ENCODE measurements at regions of chr2 and their contacts with region 1.

Region 1: DNA sequence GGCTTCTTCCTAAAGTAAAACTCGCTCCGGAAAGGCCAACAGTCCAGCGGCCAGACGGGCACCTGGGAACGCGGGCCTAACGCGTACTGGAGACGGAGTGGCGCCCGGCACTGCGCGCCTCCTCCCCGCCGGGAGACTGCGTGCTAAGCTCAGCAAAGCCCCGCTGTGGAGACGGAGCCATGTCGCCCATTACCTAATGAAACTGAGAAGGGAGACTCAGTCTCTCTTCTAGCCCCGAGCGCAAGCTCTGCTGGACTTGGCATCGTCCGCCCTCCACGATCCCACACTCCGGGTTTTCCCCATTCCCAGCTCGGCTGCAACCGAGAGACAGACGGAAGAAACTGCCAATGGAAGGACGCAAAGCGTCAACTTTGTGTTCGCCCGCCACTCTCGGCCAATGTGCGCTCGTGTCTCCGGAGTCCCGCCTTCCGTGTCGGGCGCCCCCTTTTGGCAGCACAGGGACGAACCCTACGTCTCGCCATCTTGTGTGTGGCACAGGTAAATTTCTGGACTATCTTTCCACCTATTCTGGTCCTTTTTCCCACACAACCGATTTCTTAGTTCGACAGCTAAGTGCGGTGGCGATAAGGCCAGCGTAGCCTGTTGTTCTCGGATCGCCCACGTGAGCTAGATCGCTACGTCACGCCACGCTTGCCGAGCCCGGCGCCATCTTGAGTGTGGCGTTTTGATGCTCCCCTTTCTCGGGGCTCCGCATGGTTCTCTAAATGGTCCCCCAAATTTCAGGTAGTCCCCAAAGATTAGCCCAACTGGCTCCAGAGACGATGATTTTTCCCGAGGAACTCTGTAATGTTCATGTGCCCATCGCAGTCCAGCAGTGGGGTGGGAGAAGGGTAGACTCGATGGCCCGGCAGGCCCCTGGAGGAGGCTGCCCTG is 1.3 kb upstream of the PTMA start:
- DNase-seq: peak; percentile 98
- H3K4me3 Mint-ChIP-seq: peak overlapping the region; percentile 91
- H3K27ac Mint-ChIP-seq: peak overlapping the region; percentile 100
- H3K4me1 Mint-ChIP-seq: peaks cover 26% of the 10 kb centered on the region
- H3K27me3 Mint-ChIP-seq: peaks cover 2% of the 10 kb centered on the region

Region 2: DNA sequence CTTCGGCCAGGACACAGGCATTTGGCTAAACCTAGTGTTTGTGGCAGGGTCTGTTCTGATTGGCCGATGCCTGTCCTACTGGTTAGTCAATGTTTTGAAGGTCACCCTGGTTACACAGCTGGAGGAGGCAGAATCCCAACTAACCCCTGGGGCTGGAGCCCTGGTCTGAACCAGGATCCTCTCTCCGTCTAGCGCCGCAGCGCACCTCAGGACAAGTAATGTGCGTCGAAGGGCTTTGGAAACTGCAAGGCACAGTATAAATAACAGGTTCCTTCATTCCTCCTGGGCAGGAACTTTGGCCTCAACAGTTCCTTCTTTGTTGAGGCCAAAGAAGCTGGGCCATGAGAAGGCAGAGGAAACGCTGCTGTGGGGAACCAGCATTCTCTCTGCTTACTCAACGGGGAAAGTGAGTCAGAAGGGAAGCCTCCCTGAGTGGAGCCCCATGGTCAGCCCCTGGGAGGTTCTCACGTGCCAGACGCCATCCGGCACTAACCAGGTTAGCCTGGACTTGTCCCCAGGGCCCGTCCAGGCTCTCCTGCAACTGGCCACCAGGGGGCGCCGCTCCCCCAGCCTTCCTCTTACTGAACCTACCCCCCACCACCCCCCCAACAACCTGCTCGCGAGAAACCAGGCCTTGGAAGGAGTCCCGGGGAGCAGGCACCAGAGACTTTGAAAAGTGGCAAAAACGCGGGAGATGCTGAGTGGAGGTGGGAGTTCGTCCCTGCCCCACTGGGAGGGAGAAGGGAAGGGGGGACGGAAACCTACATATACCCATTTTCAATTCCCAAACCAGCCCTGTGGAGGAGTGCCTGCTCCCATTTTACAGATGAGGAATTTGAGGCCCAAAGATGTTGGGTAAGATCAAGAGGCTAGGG is 94.6 kb before region 1 on chr2:
- CTCF ChIA-PET with region 1: interaction called, 111 read pairs
- POLR2A ChIA-PET with region 1: interaction called, 6 read pairs
- DNase-seq: peak; percentile 90
- H3K4me3 Mint-ChIP-seq: peak overlapping the region; percentile 72
- H3K27ac Mint-ChIP-seq: peak overlapping the region; percentile 97
- H3K4me1 Mint-ChIP-seq: peaks cover 56% of the 10 kb centered on the region
- H3K27me3 Mint-ChIP-seq: no peaks in the 10 kb centered on the region

Region 3: GRCh38 chr2:231655897-231656296 is 51.1 kb before region 1 on chr2:
- CTCF ChIA-PET with region 1: interaction called, 43 read pairs
- POLR2A ChIA-PET with region 1: no interaction called
- DNase-seq: no peak
- H3K4me3 Mint-ChIP-seq: no peak overlapping the region
- H3K27ac Mint-ChIP-seq: no peak overlapping the region
- H3K4me1 Mint-ChIP-seq: peaks cover 3% of the 10 kb centered on the region
- H3K27me3 Mint-ChIP-seq: no peaks in the 10 kb centered on the region

Region 4: DNA sequence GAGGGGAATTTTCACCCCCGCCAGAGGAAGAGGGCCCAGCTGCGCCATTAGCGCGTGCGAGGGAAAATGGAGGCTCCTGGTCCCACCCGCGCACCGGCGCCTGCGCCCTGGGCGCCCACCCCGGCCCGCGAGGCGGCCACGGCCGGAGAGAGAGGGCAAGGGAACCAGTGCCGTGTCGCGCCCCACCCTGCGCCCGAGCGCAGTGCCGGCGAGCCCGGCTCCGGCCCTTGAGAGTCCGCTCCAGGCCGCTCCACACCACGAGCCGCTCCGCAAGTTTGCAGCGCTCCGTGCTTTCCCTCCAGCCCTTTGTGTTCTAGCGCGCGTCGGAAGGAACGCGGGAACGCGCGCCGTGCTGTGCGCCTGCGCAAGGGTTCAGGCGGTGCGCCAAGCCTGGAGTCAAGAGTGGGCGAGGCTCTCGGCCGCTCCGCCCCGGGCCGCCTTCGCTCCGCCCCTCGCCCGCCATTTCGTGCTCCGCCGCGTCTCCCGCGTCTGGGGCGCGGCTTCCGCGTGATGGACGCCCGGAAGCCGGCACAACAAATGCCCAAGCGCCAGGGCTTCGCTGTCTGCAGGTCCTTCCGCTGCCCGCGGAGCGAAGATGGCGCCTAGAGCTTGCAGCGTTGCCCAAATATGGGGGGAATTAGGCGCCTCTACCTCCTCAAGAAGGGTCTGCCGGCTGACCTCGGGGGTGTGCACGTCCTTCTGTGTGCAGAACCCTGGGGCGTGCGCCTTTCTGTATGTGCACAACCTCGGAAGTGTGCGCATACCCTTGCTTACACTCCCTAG is 44.8 kb before region 1 on chr2:
- CTCF ChIA-PET with region 1: interaction called, 43 read pairs
- POLR2A ChIA-PET with region 1: interaction called, 3 read pairs
- DNase-seq: peak; percentile 96
- H3K4me3 Mint-ChIP-seq: peak overlapping the region; percentile 74
- H3K27ac Mint-ChIP-seq: peak overlapping the region; percentile 96
- H3K4me1 Mint-ChIP-seq: peaks cover 36% of the 10 kb centered on the region
- H3K27me3 Mint-ChIP-seq: no peaks in the 10 kb centered on the region

Region 5: GRCh38 chr2:231687133-231687852 is 19.7 kb before region 1 on chr2:
- CTCF ChIA-PET with region 1: interaction called, 37 read pairs
- POLR2A ChIA-PET with region 1: interaction called, 3 read pairs
- DNase-seq: peak; percentile 54
- H3K4me3 Mint-ChIP-seq: no peak overlapping the region
- H3K27ac Mint-ChIP-seq: no peak overlapping the region
- H3K4me1 Mint-ChIP-seq: peaks cover 10% of the 10 kb centered on the region
- H3K27me3 Mint-ChIP-seq: peaks cover 5% of the 10 kb centered on the region

Region 6: DNA sequence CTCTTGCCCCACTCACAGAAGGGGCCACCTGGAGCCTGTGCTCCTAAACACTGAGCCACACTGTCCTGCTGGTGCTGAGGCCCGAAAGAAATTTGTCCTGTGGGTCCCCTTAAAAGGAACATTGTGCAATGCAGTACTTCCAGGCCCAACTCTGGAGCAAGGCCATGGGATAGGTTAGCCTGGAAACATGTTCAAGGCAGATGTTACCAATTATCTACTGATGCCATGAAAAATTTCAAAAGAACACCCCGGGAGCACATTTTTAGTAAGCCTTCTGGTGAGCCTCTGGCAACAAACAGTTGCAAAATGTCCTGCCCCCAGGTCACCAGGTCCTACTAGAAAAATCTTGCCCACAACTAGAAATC is 11.0 kb before region 1 on chr2:
- CTCF ChIA-PET with region 1: interaction called, 29 read pairs
- POLR2A ChIA-PET with region 1: no interaction called
- DNase-seq: no peak
- H3K4me3 Mint-ChIP-seq: no peak overlapping the region
- H3K27ac Mint-ChIP-seq: no peak overlapping the region
- H3K4me1 Mint-ChIP-seq: no peaks in the 10 kb centered on the region
- H3K27me3 Mint-ChIP-seq: peaks cover 2% of the 10 kb centered on the region

Region 7: GRCh38 chr2:231727621-231728020 is 20.6 kb after region 1 on chr2:
- CTCF ChIA-PET with region 1: interaction called, 30 read pairs
- POLR2A ChIA-PET with region 1: no interaction called
- DNase-seq: no peak
- H3K4me3 Mint-ChIP-seq: no peak overlapping the region
- H3K27ac Mint-ChIP-seq: no peak overlapping the region
- H3K4me1 Mint-ChIP-seq: peaks cover 6% of the 10 kb centered on the region
- H3K27me3 Mint-ChIP-seq: no peaks in the 10 kb centered on the region